Activated CD8-positive, alpha-beta memory T cell treated with anti-CD3 and anti-CD28 coated beads, Interleukin-2, amount 10 ng/mL, durations not matched to agents 7 days and 5 days (primary cell): ENCODE measurements at regions of chr11 and their contacts with region 1.

Region 1: DNA sequence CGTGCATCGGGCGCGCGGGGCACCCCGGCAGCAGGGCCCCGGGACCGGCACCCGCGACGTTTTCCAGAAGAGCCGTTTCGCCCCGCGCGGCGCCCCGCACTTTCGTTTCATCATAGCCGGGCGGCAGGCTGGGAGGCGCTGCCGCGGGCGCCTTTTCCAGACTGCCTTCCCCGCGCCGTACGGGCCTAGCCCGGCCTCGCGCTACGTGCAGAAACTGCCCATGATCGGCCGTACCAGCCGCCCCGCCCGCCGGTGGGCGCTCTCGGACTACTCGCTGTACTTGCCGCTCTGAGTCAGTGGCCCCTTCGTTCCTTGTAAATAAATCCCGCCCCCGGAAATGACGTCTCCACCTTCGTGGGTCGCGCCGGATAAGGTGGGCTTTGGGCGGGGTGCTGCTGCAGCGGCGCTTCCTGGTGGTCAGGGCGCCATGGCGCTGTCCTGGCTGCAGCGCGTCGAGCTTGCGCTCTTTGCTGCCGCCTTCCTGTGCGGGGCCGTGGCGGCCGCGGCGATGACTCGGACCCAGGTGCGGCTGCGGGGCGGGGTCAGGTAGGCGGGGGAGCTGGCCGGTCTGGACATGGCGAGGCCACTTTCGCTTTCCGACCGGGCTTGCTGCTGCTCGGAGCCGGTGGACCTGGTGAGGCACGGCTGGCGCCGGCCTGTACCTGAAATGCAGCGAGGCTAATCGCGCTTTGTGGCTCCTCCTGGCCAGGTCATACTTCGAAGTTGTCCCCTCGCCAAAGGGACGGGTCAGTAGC is at the start of gene TMEM179B:
- DNase-seq: peak; percentile 99
- ATAC-seq: peak; percentile 71
- H3K4me3 Mint-ChIP-seq: peak within 1 kb of the TSS; percentile 95
- H3K27ac Mint-ChIP-seq: peak within 1 kb of the TSS; percentile 97
- H3K4me1 Mint-ChIP-seq: peaks cover 45% of the 10 kb centered on the region
- H3K27me3 Mint-ChIP-seq: no peaks in the 10 kb centered on the region
- total RNA-seq, gene TMEM179B: 42.4 to 43.0 TPM

Region 2: DNA sequence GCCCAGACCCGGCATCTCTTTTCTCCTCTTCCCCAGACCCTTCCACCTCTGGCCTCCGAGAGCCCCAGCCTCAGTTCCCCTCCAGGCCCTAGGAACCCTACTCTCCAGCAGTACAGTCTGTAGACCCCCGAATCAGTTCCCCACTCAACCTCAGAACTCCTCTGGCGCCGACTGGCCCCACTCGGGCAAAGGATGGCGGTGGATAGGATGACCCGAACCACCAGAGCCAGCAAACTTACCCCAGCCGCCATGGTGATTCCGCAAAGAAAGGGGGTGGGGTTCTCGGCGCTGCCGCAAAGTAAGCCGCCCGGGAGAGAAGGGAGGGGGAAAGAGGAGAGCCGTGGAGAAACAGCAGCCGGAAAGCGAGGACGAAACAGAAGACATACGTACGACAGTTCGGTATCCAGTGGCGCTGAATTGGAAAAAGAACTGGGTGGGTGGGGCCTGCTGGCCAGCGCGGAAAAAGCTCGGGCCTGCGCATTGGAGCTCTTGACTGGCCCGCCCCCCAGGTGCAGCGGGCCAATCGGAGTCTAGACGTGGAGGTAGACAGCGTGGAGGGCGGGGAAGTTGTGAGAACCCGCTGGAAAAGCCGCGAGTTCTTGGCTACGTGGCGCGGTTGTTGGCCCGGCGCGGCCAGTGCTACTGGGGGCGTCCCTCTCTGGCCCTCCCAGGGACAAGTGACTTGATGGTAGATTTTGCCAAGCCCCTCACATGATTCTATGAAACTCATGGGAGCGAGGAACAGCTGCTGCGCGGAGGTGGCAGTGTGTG is 213.4 kb before region 1 on chr11 and contains the start of gene EEF1G:
- CTCF ChIA-PET with region 1: no interaction called
- DNase-seq: peak; percentile 100
- ATAC-seq: peak; percentile 94
- H3K4me3 Mint-ChIP-seq: peak within 1 kb of the TSS; percentile 94
- H3K27ac Mint-ChIP-seq: peak within 1 kb of the TSS; percentile 89
- H3K4me1 Mint-ChIP-seq: peaks cover 51% of the 10 kb centered on the region
- H3K27me3 Mint-ChIP-seq: no peaks in the 10 kb centered on the region
- total RNA-seq, gene EEF1G: 878 to 1,201 TPM

Region 3: DNA sequence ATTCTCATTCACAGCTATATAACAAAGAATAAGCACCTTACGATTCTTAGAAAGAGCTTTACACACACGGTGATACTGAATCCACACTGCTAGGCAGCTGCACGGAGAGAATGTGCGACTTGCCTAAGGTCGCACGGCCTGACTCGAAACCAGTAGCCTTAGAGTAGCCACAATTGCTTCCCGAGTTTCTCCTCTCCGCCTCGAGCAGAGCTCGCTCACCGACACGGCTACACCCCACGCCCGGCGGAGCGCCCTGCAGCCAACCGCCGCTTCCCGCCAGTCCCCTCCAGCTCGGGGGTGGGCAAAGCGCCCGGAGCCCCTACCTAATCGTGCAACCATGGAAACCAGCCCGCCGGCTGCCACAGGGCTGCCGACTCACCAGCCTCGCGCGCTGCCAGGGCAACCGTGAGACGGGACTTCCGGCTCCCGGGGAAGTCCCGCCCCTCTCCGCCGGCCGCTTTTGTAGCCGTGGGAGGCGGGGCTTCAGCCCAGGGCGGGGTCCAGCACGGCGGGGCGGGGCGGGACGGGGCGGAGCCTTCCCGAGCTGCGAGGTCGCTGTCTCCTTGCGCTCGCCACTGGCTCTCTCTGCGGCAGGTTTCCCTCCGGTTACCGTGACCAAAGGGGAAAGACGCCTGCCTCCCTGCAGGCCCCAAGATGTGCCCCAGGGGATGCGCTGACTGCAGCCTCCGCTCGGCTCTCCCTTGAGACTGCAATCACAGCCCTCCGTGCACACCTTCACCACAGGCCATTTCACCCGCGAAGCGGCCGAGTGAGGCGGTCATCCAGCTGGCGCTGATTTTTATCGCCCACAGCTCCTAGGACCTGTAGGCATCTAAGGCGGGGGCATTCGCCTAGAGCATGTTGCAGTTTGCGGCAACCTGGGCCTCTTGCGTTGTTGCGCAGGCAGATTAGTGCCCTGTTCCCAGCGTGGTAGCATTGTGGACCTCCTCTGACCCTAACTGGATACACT is 81.0 kb before region 1 on chr11:
- CTCF ChIA-PET with region 1: interaction called, 10 read pairs
- DNase-seq: peak; percentile 96
- ATAC-seq: peak; percentile 76
- H3K4me3 Mint-ChIP-seq: peak overlapping the region; percentile 88
- H3K27ac Mint-ChIP-seq: peak overlapping the region; percentile 74
- H3K4me1 Mint-ChIP-seq: peaks cover 51% of the 10 kb centered on the region
- H3K27me3 Mint-ChIP-seq: no peaks in the 10 kb centered on the region

Region 4: DNA sequence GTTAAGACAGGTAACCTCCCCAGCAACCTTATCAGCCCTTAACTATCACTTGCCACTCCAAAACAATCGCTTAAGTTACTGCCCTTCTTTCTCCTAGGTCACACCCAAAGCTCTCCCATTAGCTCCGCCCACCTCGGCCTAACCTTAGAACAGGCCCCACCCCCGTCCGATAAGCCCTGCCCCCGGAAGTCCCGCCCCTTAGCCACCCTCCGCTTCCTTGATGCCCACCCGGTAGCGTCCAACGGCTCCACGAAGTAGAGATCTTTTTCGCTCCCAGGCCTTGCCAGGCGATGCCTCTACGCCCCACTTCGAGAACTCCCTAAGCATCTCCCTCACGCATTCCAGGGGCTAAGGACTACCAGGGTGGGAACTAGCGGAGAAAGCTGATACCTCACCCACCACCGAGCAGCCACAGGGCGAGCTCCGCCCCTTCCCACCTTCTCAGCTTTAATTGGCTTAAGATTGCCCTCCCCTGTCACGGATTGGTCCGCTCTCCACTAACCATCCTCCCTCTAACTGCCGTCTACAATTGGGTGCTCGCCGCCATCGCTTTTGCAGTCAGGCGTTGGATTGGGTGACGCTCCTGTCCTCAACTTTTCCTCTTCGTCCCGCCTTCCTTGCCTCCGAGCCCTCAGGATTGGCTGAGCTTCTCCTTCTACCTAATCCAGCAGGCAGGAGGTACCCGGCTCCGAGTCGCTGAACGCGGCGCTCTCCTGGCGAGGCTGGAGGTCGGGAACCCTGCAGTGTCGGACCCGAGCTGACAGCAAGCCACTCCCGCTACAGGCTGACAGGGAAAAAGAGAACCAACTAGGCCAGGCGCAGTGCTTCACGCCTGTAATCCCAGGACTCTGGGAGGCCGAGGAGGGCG is 33.2 kb before region 1 on chr11 and contains the start of gene ZBTB3:
- CTCF ChIA-PET with region 1: interaction called, 242 read pairs
- DNase-seq: peak; percentile 99
- ATAC-seq: peak; percentile 98
- H3K4me3 Mint-ChIP-seq: peak within 1 kb of the TSS; percentile 99
- H3K27ac Mint-ChIP-seq: peak within 1 kb of the TSS; percentile 99
- H3K4me1 Mint-ChIP-seq: peaks cover 34% of the 10 kb centered on the region
- H3K27me3 Mint-ChIP-seq: no peaks in the 10 kb centered on the region
- total RNA-seq, gene ZBTB3: 9.3 to 10.2 TPM

Region 5: GRCh38 chr11:62816557-62816956 is 29.4 kb after region 1 on chr11:
- CTCF ChIA-PET with region 1: interaction called, 18 read pairs
- DNase-seq: no peak
- ATAC-seq: no peak
- H3K4me3 Mint-ChIP-seq: no peak overlapping the region
- H3K27ac Mint-ChIP-seq: no peak overlapping the region
- H3K4me1 Mint-ChIP-seq: peaks cover 2% of the 10 kb centered on the region
- H3K27me3 Mint-ChIP-seq: no peaks in the 10 kb centered on the region

Region 6: GRCh38 chr11:62841361-62842184 is 54.4 kb after region 1 on chr11:
- CTCF ChIA-PET with region 1: interaction called, 41 read pairs
- DNase-seq: peak; percentile 91
- ATAC-seq: peak; percentile 70
- H3K4me3 Mint-ChIP-seq: no peak overlapping the region
- H3K27ac Mint-ChIP-seq: no peak overlapping the region
- H3K4me1 Mint-ChIP-seq: peaks cover 21% of the 10 kb centered on the region
- H3K27me3 Mint-ChIP-seq: no peaks in the 10 kb centered on the region

Region 7: DNA sequence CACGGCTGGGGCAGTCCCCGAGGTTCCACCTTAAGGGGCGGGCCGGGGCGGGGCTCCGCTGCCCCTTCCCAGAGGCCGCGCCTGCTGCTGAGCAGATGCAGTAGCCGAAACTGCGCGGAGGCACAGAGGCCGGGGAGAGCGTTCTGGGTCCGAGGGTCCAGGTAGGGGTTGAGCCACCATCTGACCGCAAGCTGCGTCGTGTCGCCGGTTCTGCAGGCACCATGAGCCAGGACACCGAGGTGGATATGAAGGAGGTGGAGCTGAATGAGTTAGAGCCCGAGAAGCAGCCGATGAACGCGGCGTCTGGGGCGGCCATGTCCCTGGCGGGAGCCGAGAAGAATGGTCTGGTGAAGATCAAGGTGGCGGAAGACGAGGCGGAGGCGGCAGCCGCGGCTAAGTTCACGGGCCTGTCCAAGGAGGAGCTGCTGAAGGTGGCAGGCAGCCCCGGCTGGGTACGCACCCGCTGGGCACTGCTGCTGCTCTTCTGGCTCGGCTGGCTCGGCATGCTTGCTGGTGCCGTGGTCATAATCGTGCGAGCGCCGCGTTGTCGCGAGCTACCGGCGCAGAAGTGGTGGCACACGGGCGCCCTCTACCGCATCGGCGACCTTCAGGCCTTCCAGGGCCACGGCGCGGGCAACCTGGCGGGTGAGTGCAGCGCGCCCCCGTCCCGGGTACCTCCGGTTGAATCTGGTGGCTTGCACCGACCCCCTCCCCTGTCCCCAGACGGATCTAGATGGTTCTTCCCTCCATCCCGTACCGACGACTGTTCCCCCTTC is 93.8 kb after region 1 on chr11 and contains the start of gene SLC3A2:
- CTCF ChIA-PET with region 1: interaction called, 43 read pairs
- DNase-seq: peak; percentile 94
- ATAC-seq: peak; percentile 85
- H3K4me3 Mint-ChIP-seq: peak within 1 kb of the TSS; percentile 96
- H3K27ac Mint-ChIP-seq: peak within 1 kb of the TSS; percentile 100
- H3K4me1 Mint-ChIP-seq: peaks cover 45% of the 10 kb centered on the region
- H3K27me3 Mint-ChIP-seq: no peaks in the 10 kb centered on the region
- total RNA-seq, gene SLC3A2: 213 to 259 TPM